ENCODE measurements at regions of chr19 and their contacts with region 1.

Region 1: DNA sequence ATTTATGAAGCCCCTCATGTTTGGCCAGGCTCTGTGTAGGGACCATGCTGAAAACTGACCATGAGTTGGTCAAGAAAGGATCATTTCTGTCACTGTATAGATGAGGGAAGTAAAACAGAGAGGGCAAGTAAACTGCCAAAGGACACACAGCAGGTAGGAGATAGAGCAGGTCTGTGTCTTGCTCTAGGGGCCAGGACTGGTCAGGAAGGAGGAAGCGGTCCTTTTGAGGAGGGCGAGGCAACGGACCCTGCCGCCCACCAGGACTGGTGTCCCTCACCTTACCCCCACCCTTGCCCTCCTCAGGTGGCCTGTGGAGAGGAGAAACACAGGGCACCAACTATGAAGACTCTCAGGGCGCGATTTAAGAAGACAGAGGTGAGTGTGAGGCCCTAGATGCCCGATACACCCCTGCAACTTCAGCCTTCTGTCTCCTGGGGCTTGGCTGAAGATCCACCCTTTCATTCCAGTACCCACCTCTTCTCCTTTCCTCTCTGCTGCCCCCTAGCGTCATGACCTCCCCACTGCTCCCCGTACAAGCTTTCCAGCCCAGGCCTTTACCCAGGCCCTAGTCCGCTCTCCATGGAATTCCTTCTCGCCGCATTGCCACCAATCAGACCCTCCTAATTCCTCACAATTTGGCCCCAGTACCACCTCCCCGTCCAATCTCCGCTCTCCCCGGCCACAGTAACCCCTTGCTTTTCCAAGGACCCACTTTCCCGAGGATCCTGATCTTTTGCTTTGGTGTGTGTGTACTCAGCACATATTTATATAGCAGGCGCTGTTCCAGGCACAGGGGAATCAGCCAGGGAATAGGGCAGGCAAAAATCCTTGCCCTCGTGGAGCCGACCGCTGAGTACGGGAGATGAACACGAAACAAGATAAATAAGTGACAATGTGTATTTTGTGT is 3.9 kb downstream of the ANKRD24 start:
- DNase-seq: peak; percentile 90
- H3K4me3 ChIP-seq: peak overlapping the region in 1 of 2 experiments; percentile 17; a peak in 1 of 4 replicates
- H3K27ac ChIP-seq: no peak overlapping the region
- H3K4me1 ChIP-seq: peaks cover 0 to 1% of the 10 kb centered on the region in 2 experiments; a peak in 1 of 4 replicates
- H3K27me3 ChIP-seq: no peaks in the 10 kb centered on the region
- CTCF ChIP-seq: peak; percentile 79
- EP300 ChIP-seq: no peak
- RAD21 ChIP-seq: peak; percentile 69

Region 2: DNA sequence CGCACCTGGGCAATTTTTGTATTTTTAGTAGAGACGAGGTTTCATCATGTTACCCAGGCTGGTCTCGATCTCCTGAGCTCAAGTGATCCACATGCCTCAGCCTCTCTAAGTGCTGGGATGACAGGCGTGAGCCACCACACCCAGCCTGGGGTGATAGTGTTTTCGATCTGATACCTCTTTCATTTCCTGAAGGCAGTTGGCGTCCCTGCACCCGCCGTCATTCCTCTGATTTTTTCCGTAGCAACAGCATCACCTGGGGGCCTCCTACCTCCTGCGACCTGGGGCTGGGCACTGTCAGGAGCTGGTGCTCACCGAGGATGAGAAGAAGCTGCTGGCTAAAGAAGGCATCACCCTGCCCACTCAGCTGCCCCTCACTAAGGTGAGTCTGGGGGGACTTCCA is 22.1 kb before region 1 on chr19:
- CTCF ChIA-PET with region 1: interaction called, 12 read pairs
- POLR2A ChIA-PET with region 1: no interaction called
- DNase-seq: no peak
- H3K4me3 ChIP-seq: no peak overlapping the region
- H3K27ac ChIP-seq: no peak overlapping the region
- H3K4me1 ChIP-seq: no peaks in the 10 kb centered on the region
- H3K27me3 ChIP-seq: peaks cover 84% of the 10 kb centered on the region
- CTCF ChIP-seq: no peak
- EP300 ChIP-seq: no peak
- RAD21 ChIP-seq: no peak

Region 3: GRCh38 chr19:4199699-4200293 is 13.5 kb after region 1 on chr19:
- CTCF ChIA-PET with region 1: interaction called, 20 read pairs
- POLR2A ChIA-PET with region 1: no interaction called
- DNase-seq: peak; percentile 53
- H3K4me3 ChIP-seq: no peak overlapping the region
- H3K27ac ChIP-seq: no peak overlapping the region
- H3K4me1 ChIP-seq: no peaks in the 10 kb centered on the region
- H3K27me3 ChIP-seq: peaks cover 71% of the 10 kb centered on the region
- CTCF ChIP-seq: peak; percentile 24
- EP300 ChIP-seq: no peak
- RAD21 ChIP-seq: no peak

Region 4: DNA sequence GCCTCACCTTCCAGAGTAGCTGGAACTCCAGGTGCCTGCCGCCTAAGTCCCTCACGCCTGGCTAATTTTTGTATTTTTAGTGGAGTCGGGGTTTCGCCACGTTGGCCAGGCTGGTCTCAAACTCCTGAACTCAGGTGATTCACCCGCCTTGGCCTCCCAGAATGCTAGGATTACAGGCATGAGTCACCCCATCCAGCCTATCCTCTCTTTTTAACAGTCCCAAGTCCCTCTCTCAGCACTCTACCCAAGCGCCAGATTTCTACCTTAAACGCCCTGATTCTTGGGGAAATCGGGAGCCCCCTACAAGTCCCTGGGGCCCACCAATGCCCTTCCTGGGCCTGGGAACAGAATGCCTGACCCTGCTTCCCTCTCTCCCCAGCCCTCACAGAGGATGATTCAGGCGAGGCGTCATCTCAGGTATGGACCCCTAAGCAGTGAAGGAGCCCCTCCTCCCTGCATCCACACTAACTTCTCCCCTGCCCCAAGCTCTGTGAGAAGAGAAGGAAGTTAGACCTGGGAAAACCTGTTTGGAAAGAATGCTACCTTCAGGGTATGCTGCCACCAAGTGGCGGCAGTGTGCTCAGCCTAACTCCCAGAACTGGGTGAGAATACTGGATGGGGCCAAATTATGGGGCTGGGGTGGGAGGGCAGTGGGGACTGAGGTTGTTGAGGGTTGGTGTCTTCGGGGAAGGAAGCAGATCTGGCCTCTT is 22.2 kb after region 1 on chr19:
- CTCF ChIA-PET with region 1: interaction called, 10 read pairs
- POLR2A ChIA-PET with region 1: no interaction called
- DNase-seq: peak; percentile 68
- H3K4me3 ChIP-seq: no peak overlapping the region
- H3K27ac ChIP-seq: no peak overlapping the region
- H3K4me1 ChIP-seq: no peaks in the 10 kb centered on the region
- H3K27me3 ChIP-seq: peaks cover 14% of the 10 kb centered on the region
- CTCF ChIP-seq: peak; percentile 55
- EP300 ChIP-seq: no peak
- RAD21 ChIP-seq: no peak

Region 5: GRCh38 chr19:4457654-4458395 is 271.5 kb after region 1 on chr19 and contains the start of gene UBXN6:
- CTCF ChIA-PET with region 1: no interaction called
- POLR2A ChIA-PET with region 1: no interaction called
- DNase-seq: peak; percentile 92
- H3K4me3 ChIP-seq: peak within 1 kb of the TSS; percentile 58 to 87
- H3K27ac ChIP-seq: peak within 1 kb of the TSS; percentile 83 to 89
- H3K4me1 ChIP-seq: peaks cover 6 to 13% of the 10 kb centered on the region in 2 experiments; a peak in 2 of 4 replicates
- H3K27me3 ChIP-seq: no peaks in the 10 kb centered on the region
- CTCF ChIP-seq: no peak
- EP300 ChIP-seq: peak in 1 of 2 experiments; percentile 29; a peak in 1 of 4 replicates
- RAD21 ChIP-seq: no peak
- polyA plus RNA-seq, gene UBXN6: 100 and 110 TPM in 2 replicates

Measured in SK-N-SH (cell line).